ENCODE measurements at regions of chr15 and their contacts with region 1.

Region 1: DNA sequence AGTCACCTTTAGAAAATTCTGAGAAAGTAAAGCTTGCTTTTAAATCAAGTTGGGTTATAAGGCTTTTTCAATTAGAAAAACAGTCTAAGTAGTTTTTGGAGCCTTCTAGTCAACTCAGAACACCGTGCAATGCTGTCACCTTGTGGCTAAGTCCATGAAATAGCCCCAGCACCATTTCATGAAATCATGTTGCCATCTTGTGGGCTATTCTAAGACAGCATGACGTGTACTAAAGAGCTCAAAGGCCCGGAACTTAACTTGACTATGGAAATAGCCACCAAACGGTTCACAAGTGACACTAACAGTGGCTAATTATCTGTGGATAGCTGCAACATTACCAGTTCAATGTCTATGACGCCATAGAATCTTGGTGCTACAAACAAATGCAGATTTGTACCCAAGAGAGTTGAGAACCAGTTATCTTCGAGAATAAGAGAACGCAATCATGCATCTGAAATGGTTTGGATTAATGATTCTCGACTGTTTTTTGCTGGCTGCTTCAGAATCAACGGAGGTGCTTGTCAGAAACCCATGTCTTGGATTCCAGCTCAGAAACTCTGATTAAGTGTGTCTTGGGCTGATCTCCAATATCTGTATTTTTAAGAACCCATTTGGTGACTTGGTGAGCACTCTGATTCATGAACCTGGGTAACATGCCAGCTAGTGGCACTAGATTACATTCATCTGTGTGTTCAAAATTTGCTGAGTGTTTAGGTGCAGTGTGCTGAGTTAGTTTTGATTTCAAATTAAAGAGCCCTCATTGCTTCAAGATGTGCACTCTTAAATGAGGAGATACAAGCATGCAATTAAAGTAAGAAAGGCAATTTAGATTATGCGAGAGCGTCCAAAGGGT is 111.2 kb upstream of the MCTP2 start:
- H3K4me3 Mint-ChIP-seq: no peak overlapping the region
- H3K27ac Mint-ChIP-seq: no peak overlapping the region
- H3K4me1 Mint-ChIP-seq: peaks cover 6% of the 10 kb centered on the region
- H3K27me3 Mint-ChIP-seq: no peaks in the 10 kb centered on the region

Region 2: DNA sequence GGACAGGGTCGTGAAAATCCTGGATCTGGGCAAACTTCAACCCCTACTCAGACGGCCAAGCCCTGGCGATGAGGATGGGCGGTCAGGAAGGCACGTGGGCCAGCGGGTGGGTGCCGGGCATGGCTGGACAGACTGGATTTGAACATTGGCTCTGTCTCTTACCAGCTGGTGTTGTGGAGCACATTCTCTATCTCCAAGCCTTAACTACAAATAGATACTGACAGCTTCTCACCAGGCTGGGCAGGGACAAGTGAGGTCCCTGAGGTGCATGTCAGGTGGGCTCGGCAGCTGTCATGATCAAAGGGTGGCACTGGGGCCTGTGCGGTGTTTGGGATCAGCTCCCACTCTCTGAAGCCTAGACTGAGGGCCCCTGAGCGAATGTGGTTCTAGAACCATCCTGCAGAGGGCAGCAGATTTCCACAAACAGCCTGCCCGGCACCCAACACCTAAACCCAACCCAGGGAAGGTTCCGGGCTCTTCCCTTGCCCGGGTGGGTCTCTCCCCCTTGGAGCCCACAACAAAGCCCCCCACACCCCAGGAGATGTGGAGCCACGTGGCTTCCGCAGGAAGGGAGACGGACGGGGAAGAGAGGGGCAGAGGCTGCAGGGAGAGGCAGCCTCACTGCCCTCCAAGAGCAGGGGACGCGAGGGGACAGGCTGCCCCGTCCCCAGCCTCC is 1089.6 kb before region 1 on chr15:
- intact Hi-C with region 1: loop called (anchors 2 kb)
- H3K4me3 Mint-ChIP-seq: no peak overlapping the region
- H3K27ac Mint-ChIP-seq: peak overlapping the region; percentile 95
- H3K4me1 Mint-ChIP-seq: peaks cover 54% of the 10 kb centered on the region
- H3K27me3 Mint-ChIP-seq: peaks cover 7% of the 10 kb centered on the region

Region 3: GRCh38 chr15:93087825-93088199 is 1032.3 kb before region 1 on chr15:
- intact Hi-C with region 1: loop called (anchors 1 kb)
- H3K4me3 Mint-ChIP-seq: peak overlapping the region; percentile 76
- H3K27ac Mint-ChIP-seq: no peak overlapping the region
- H3K4me1 Mint-ChIP-seq: peaks cover 17% of the 10 kb centered on the region
- H3K27me3 Mint-ChIP-seq: peaks cover 59% of the 10 kb centered on the region

Region 4: GRCh38 chr15:93771196-93772030 is 348.7 kb before region 1 on chr15:
- intact Hi-C with region 1: no loop called
- H3K4me3 Mint-ChIP-seq: no peak overlapping the region
- H3K27ac Mint-ChIP-seq: no peak overlapping the region
- H3K4me1 Mint-ChIP-seq: no peaks in the 10 kb centered on the region
- H3K27me3 Mint-ChIP-seq: peaks cover 1% of the 10 kb centered on the region

Region 5: GRCh38 chr15:93997084-93997918 is 122.8 kb before region 1 on chr15:
- intact Hi-C with region 1: loop called (anchors 5 kb)
- H3K4me3 Mint-ChIP-seq: no peak overlapping the region
- H3K27ac Mint-ChIP-seq: no peak overlapping the region
- H3K4me1 Mint-ChIP-seq: no peaks in the 10 kb centered on the region
- H3K27me3 Mint-ChIP-seq: no peaks in the 10 kb centered on the region

Measured in dendritic cell treated with granulocyte-macrophage colony-stimulating factor and Interleukin-4, amounts not matched to agents 40 ng/mL and 50 ng/mL, for 4 days (primary cell).